ENCODE measurements at regions of chr2 and their contacts with region 1.

Region 1: DNA sequence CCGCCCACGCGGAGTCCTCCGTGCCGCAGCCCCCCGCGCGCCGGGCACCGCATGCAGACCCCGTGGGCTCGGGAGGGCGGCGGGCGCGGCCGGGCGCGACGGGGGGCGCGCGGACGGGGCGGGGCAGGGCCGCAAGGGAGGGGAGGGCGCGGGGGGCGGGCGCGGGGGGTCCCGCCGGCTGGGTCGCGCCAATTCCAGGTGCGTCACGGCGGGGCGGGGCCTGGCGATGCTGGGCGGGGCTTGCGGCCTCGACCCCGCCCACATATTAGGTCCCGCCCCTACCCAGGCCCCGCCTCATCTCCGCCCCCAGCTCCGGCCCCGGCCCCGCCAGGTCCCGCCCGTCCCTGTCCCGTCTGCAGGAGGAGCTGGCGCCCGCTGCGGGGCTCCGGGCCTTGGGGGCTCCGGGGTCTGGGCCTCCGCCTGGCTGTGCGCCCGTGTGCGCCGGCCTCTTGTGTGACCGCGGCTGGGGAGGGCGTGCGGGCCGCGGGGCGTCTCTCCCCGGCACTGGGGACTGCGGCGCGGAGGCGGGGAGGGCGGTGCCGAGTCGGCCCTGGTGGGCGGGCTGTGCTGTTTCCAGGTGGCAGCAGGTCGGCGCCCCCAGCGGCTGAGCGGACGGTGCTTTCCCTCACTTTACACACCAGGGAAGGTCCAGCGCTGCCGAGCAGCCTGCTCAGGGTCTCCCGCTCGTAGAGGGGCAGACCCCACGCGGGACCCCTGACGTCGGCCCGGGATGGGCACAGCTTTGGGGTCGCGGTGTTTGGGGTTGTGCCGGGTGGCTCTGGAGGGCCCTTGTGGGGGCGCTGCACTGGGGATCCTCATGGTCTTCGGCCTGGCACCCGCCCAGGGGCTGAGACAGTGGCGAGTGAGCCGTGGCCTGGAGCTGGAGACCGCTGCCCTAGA is 543 bp downstream of the ING5 start:
- DNase-seq: peak; percentile 86 to 94 (median 87)
- ATAC-seq: peak; percentile 82 to 94 (median 90)
- H3K4me3 ChIP-seq: peak overlapping the region; percentile 63 to 99 (median 85)
- H3K27ac ChIP-seq: peak overlapping the region; percentile 70 to 97 (median 91)
- H3K4me1 ChIP-seq: peaks cover 0 to 21% (median 14%) of the 10 kb centered on the region in 12 donors
- H3K27me3 ChIP-seq: no peaks in the 10 kb centered on the region
- CTCF ChIP-seq: peak in 11 of 12 donors; percentile 10 to 66 (median 38)
- POLR2A ChIP-seq: peak in 1 of 2 donors; percentile 8

Region 2: DNA sequence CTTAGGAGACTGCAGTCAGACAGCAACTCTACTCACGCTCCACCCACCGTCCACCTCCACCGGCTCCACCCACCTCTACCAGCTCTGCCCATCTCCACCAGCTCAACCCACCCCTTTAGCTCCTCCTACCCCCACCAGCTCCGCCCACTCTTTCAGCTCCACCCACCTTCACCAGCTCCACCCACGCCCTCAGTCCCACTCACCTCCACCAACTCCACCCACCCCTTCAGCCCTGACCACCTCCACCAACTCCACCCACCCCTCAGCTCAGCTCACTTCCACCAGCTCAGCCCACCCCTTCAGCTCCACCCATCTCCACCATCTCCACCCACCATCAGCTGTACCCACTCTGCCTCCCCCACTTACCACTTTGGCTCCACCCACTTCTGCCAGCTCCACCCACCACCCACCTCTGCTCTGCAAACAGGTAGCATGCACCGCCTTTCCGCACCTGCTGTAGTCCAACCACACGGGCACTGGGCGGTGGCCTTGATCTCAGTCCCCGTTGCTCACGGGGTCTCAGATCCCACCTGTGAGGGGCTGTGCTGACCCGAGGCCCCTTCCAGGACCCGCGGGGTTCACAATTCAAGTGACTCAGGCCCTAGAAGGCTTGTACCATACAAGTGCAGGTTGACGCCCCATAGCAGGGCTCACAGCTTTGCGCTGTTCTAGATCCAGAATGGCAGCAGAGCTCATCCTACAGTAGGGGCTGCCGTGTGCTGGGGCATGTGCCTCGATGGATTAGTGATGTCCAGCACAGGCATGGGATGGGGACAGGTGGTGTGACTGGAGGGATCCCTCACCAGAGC is 1484.7 kb before region 1 on chr2:
- intact Hi-C with region 1: no loop called
- DNase-seq: peak in 3 of 5 donors; percentile 2 to 14 (median 12)
- ATAC-seq: peak in 1 of 4 donors; percentile 27
- H3K4me3 ChIP-seq: no peak overlapping the region
- H3K27ac ChIP-seq: no peak overlapping the region
- H3K4me1 ChIP-seq: no peaks in the 10 kb centered on the region
- H3K27me3 ChIP-seq: peaks cover 0 to 5% (median 0%) of the 10 kb centered on the region in 9 donors
- CTCF ChIP-seq: no peak
- POLR2A ChIP-seq: no peak

Region 3: GRCh38 chr2:241555711-241556110 is 146.7 kb before region 1 on chr2:
- intact Hi-C with region 1: no loop called
- DNase-seq: peak in 1 of 5 donors; percentile 13
- ATAC-seq: no peak
- H3K4me3 ChIP-seq: no peak overlapping the region
- H3K27ac ChIP-seq: no peak overlapping the region
- H3K4me1 ChIP-seq: peaks cover 0 to 36% (median 13%) of the 10 kb centered on the region in 12 donors
- H3K27me3 ChIP-seq: peaks cover 0 to 27% (median 2%) of the 10 kb centered on the region in 9 donors
- CTCF ChIP-seq: no peak
- POLR2A ChIP-seq: no peak

Region 4: DNA sequence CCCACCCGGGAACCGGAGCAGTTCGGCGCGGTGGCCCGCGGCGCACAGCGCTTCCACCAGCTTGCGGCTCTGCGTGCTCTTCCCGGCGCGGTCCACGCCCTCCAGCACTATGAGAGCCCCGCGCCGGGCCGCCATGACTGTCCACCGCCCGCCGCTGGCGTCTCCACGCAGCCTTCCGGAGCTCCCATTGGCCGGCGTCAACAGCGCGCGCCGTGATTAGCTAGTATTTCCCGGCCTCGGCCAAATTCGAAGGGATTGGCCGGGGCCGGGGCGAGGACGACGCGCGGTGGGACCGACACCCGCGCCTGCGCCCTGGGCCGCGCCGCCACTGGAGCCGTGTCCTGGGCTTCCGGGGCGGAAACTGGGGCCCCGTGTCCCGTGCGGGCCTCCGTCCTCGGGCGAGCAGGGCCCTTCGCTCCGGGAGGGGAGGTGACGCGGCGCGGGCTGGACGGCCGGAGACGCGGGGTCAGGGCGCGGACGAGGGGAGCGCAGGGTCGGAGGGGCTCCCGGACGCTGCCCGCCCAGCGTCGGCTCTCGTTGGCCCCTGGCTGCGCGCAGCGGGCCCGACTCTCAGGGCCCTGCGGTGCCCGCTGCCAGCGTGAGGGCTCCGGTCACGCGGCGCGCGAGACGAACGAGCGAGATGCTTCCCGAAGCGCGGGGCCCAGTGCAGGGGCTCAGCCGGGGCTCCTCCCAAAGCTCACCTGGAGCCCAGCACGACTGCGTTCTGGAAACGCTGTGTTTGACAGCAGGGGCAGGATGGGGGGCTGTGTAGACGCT is 15.5 kb before region 1 on chr2 and contains the start of gene DTYMK:
- intact Hi-C with region 1: loop called in 1 of 10 experiments (anchors 2 kb)
- DNase-seq: peak; percentile 97 to 99 (median 98)
- ATAC-seq: peak; percentile 98 to 99 (median 98)
- H3K4me3 ChIP-seq: peak within 1 kb of the TSS; percentile 64 to 99 (median 93)
- H3K27ac ChIP-seq: peak within 1 kb of the TSS; percentile 67 to 96 (median 95)
- H3K4me1 ChIP-seq: peaks cover 4 to 32% (median 20%) of the 10 kb centered on the region in 12 donors
- H3K27me3 ChIP-seq: no peaks in the 10 kb centered on the region
- CTCF ChIP-seq: peak in 1 of 12 donors; percentile 3
- POLR2A ChIP-seq: peak; percentile 13 to 84
- total RNA-seq, gene DTYMK: 7.5 to 21.0 (median 8.5) TPM

Measured in heart left ventricle (tissue), 16 donors.